ENCODE measurements at regions of chr1 and their contacts with region 1.

Region 1: GRCh38 chr1:230077436-230078221 is 10.6 kb downstream of the GALNT2 start:
- DNase-seq: no peak
- H3K4me3 ChIP-seq: no peak overlapping the region
- H3K27ac ChIP-seq: no peak overlapping the region
- H3K4me1 ChIP-seq: peaks cover 14% of the 10 kb centered on the region
- H3K27me3 ChIP-seq: no peaks in the 10 kb centered on the region
- CTCF ChIP-seq: no peak

Region 2: DNA sequence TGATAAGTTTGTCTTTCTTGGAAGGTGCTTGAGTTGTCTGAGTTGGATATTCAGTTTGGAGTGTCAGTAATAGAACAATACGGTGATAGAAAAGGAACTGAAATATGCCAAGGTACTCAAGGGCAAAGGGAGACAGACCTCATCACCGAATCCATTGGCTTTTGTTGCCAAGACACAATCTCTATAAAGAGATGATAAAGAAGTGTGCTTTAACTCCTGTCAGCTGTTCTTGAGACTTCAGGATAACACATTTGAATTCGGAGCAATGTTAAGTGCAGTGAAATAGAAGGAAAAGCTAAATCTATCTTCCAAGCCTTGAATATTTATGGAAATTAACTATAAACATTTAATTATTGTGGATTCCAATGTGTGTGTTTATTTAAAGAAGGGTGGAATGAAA is 1743.7 kb after region 1 on chr1:
- CTCF ChIA-PET with region 1: interaction called, 10 read pairs
- POLR2A ChIA-PET with region 1: no interaction called
- intact Hi-C with region 1: no loop called
- DNase-seq: no peak
- H3K4me3 ChIP-seq: no peak overlapping the region
- H3K27ac ChIP-seq: no peak overlapping the region
- H3K4me1 ChIP-seq: peaks cover 3% of the 10 kb centered on the region; the same call in 1 of the 2 replicates
- H3K27me3 ChIP-seq: no peaks in the 10 kb centered on the region
- CTCF ChIP-seq: no peak